Activated T-helper 2 cell treated with anti-CD3 and anti-CD28 coated beads, Interferon-gamma antibody, Interleukin-2, Interleukin-4, amounts not matched to agents 10 μg/mL and 5 μg/mL and 100 μg/mL, durations not matched to agents 14 hours and 24 hours and 36 hours (primary cell): ENCODE measurements at regions of chr15 and their contacts with region 1.

Region 1: GRCh38 chr15:66946578-66947164 is 118.7 kb upstream of the SMAD3 start:
- DNase-seq: peak; percentile 63
- H3K4me3 Mint-ChIP-seq: no peak overlapping the region
- H3K27ac Mint-ChIP-seq: no peak overlapping the region
- H3K4me1 Mint-ChIP-seq: peaks cover 6% of the 10 kb centered on the region
- H3K27me3 Mint-ChIP-seq: peaks cover 17% of the 10 kb centered on the region

Region 2: GRCh38 chr15:66803182-66803729 is 143.4 kb before region 1 on chr15:
- intact Hi-C with region 1: no loop called
- DNase-seq: no peak
- H3K4me3 Mint-ChIP-seq: no peak overlapping the region
- H3K27ac Mint-ChIP-seq: no peak overlapping the region
- H3K4me1 Mint-ChIP-seq: no peaks in the 10 kb centered on the region
- H3K27me3 Mint-ChIP-seq: peaks cover 5% of the 10 kb centered on the region

Region 3: GRCh38 chr15:66883322-66883911 is 63.3 kb before region 1 on chr15:
- intact Hi-C with region 1: loop called (anchors 10 kb)
- DNase-seq: no peak
- H3K4me3 Mint-ChIP-seq: no peak overlapping the region
- H3K27ac Mint-ChIP-seq: no peak overlapping the region
- H3K4me1 Mint-ChIP-seq: no peaks in the 10 kb centered on the region
- H3K27me3 Mint-ChIP-seq: peaks cover 1% of the 10 kb centered on the region

Region 4: DNA sequence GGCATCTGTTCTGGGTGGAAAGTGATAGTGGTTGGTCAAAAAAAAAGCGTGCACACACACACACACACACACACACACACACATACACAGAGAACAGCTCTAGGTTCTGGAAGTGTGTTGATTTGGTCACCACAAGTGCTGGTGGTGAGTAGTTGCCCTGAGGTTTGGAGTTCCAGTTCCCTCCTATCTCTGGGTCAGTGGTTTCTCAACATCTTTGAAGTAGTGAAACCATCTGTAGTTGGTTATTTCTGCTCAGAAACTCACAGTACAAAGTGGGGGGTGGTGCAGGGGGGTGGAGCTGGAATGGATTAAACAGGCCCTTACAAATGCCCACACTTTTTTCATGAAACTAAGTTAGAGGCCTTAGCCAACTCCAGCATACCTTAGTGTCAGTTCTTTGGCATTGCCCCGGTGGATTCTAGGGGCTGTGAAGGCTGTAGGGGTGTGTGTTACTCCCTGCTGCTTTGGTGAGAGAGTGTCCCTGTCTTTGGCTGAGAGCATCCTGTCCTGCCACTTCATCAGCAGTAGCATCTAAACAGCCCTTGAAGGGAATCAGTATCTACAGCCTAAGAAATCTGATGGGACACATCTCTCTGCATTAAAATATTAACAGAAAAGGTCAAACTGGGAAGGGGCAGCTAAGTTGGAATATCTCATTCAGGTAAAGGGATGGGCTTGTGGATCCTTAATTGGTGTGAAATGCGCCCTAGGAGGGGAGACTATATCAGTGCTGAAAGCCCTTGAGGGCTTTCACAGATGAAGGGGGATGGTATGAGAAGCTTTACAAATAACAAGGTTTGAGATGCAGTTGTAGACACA is 139.4 kb after region 1 on chr15:
- intact Hi-C with region 1: loop called (anchors 5 kb)
- DNase-seq: peak; percentile 44
- H3K4me3 Mint-ChIP-seq: peak overlapping the region; percentile 24
- H3K27ac Mint-ChIP-seq: peak overlapping the region; percentile 74
- H3K4me1 Mint-ChIP-seq: peaks cover 94% of the 10 kb centered on the region
- H3K27me3 Mint-ChIP-seq: no peaks in the 10 kb centered on the region

Region 5: DNA sequence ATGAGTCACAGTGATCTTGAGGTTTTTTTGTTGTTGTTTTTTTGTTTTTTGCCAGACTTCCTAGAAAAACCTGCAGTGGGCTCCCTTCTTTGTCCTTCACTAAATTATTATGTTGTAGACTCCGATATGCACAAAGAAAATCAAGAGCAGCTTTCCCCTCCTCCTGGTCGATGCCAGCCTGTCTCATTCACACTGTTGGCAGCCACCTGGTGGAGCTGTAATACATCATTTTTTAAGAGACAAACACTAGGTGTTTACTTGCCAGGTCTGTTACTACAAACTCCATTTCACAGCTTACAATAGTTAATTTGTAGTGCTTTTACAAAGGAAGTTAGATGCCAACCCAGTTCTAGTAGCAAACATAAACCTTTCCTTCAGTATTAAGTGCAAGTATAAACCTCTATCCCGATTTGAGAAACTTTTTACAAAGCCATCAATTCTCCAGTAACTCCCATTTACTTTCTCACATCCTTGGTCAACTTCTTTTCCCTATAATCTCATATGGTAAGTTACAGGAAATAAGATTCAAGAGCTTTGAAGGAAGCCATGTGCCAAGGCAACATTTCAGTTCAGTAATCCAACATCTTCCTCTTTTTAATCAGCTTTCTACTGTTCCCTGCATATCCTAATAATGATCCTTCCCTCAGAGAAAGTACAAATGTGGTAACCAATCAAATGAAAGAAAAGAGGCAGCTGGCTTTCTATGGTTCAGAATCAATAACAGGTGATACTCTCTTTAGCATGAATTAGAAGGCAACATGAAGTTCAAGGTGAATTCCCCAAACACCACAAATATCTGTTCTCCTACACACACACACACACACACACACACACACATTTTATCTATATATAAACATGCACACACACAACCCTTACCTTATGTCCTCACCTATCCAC is 293.8 kb after region 1 on chr15:
- intact Hi-C with region 1: loop called (anchors 1 kb)
- DNase-seq: no peak
- H3K4me3 Mint-ChIP-seq: peak overlapping the region; percentile 36
- H3K27ac Mint-ChIP-seq: peak overlapping the region; percentile 66
- H3K4me1 Mint-ChIP-seq: peaks cover 45% of the 10 kb centered on the region
- H3K27me3 Mint-ChIP-seq: no peaks in the 10 kb centered on the region

Region 6: DNA sequence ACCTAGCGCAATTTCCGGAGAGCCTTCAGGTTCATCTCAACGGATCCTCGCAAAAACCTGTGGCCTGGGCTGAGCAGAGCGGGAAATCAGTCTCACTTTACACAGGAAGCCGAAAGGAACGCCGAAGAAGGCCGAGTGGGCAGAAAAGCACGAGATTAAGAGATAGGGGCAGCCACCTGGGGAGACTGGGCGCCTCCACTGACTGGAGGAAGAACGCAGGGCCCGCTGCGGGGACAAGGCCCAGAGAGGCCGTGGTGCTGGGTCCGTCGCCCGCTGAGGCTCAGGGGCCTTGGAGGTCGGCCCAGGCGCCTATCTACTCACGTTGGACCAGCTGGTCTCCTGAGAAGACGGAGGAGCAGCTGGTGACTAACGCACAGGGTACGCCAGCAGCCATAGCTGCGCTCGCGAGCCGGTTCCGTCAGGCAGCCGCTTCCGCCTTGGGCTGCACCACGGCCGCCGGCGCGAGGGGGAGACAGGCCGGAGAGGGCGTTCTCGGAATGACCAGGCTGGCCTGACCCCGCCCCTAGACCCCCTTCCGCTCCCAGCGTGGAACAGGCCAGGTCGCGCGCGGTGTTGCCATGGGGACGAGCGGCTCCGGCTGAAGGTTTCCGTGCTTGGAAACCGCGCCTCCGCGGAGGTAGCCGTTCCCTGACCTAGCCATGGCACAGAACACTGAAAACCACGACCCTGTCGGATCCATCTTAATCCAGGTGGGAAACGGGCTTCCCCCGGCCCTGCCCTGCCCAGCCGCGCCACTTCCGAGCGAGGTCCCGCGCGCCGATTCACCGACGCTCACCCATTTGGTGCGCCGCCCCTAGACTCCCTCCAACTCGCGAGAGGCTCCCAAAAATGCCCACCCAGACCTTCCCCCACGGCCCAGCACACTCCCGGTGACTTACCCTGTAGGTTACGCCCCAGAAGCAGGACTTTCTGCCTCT is 307.8 kb after region 1 on chr15 and contains the starts of genes AAGAB and IQCH:
- intact Hi-C with region 1: loop called (anchors 2 kb)
- DNase-seq: peak; percentile 96
- H3K4me3 Mint-ChIP-seq: peak within 1 kb of the TSS; percentile 94
- H3K27ac Mint-ChIP-seq: peak within 1 kb of the TSS; percentile 96
- H3K4me1 Mint-ChIP-seq: peaks cover 36% of the 10 kb centered on the region
- H3K27me3 Mint-ChIP-seq: peaks cover 13% of the 10 kb centered on the region
- total RNA-seq, gene AAGAB: 35.8 and 41.3 TPM in 2 replicates
- total RNA-seq, gene IQCH: 0.68 and 1.7 TPM in 2 replicates

Region 7: GRCh38 chr15:67303490-67304363 is 357.1 kb after region 1 on chr15:
- intact Hi-C with region 1: loop called (anchors 1 kb)
- DNase-seq: no peak
- H3K4me3 Mint-ChIP-seq: no peak overlapping the region
- H3K27ac Mint-ChIP-seq: no peak overlapping the region
- H3K4me1 Mint-ChIP-seq: peaks cover 8% of the 10 kb centered on the region
- H3K27me3 Mint-ChIP-seq: peaks cover 32% of the 10 kb centered on the region

Region 8: DNA sequence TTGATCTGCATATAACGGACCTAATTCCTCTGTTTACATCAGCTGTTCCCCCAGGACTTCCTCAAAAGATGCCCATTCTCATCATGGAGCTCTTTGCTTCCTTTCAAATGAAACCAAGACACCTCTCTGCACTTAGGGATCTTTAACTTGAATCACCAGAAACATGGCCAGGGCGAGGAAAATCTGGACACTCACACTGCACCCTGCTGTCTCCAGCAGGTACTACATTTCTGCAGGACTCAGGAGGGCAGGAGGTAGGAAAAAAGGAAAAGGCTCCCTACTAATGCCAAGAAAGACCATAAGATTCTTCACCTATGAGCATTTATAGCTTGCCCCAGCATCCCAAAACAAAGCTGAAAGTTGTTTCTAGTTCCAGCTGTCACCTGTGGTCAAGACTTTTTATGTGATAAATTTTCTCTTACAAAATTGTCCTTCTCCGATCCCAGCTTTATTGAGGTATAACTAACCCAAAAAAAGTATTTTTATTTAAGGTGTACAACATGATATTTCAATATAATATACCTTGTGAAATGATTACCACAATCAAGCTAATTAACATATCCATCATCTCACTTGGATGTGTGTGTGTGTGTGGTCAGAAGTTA is 486.9 kb after region 1 on chr15:
- intact Hi-C with region 1: loop called (anchors 5 kb)
- DNase-seq: no peak
- H3K4me3 Mint-ChIP-seq: no peak overlapping the region
- H3K27ac Mint-ChIP-seq: no peak overlapping the region
- H3K4me1 Mint-ChIP-seq: no peaks in the 10 kb centered on the region
- H3K27me3 Mint-ChIP-seq: peaks cover 4% of the 10 kb centered on the region